Activated CD4-positive, alpha-beta T cell treated with anti-CD3 and anti-CD28 coated beads, Interleukin-2, amount 10 ng/mL, durations not matched to agents 24 days and 14 days (primary cell): ENCODE measurements at regions of chr12 and their contacts with region 1.

Region 1: GRCh38 chr12:46401662-46402061 is 29.1 kb upstream of the SLC38A2 start:
- DNase-seq: no peak
- H3K4me3 Mint-ChIP-seq: no peak overlapping the region
- H3K27ac Mint-ChIP-seq: no peak overlapping the region
- H3K4me1 Mint-ChIP-seq: peaks cover 64% of the 10 kb centered on the region
- H3K27me3 Mint-ChIP-seq: no peaks in the 10 kb centered on the region

Region 2: DNA sequence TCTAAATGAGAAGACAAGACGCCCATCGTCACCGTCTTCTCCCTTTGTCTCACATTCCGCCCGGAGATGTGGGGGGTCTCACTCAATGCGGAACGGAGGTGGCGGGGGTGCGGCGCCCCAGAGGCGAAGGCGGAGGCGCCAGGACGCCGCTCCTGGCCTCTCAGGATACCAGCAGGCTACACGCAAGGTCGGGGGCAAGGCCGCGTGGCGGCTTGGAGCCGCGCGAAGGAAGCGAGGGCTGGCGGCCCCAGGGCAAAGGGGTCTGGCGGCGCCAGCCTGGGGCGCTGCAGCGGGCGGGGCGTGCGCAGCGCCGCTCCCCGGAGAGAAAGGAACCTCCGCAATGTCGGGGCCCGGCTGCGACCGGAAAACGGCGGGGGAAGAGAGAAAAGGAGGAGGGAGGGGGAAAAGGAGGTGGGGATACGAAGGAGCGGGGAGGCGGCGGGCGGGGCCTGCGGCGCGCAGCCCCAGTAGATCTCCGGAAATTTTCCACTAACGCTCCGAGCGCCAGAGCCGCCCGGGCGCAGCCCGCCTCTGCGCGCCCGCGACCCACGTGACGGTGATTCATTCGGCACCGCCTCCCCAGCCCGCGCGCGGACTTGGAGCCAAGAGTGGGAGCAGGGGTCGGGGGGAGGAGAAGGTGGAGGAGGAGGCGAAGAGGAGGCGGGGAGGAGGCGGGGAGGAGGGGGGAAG is 18.6 kb before region 1 on chr12:
- intact Hi-C with region 1: loop called (anchors 1 kb)
- DNase-seq: peak; percentile 99
- H3K4me3 Mint-ChIP-seq: peak overlapping the region; percentile 83
- H3K27ac Mint-ChIP-seq: peak overlapping the region; percentile 98
- H3K4me1 Mint-ChIP-seq: peaks cover 36% of the 10 kb centered on the region
- H3K27me3 Mint-ChIP-seq: no peaks in the 10 kb centered on the region

Region 3: GRCh38 chr12:46388427-46389021 is 13.1 kb before region 1 on chr12:
- intact Hi-C with region 1: loop called (anchors 1 kb)
- DNase-seq: no peak
- H3K4me3 Mint-ChIP-seq: peak overlapping the region; percentile 36
- H3K27ac Mint-ChIP-seq: peak overlapping the region; percentile 47
- H3K4me1 Mint-ChIP-seq: peaks cover 42% of the 10 kb centered on the region
- H3K27me3 Mint-ChIP-seq: no peaks in the 10 kb centered on the region

Region 4: DNA sequence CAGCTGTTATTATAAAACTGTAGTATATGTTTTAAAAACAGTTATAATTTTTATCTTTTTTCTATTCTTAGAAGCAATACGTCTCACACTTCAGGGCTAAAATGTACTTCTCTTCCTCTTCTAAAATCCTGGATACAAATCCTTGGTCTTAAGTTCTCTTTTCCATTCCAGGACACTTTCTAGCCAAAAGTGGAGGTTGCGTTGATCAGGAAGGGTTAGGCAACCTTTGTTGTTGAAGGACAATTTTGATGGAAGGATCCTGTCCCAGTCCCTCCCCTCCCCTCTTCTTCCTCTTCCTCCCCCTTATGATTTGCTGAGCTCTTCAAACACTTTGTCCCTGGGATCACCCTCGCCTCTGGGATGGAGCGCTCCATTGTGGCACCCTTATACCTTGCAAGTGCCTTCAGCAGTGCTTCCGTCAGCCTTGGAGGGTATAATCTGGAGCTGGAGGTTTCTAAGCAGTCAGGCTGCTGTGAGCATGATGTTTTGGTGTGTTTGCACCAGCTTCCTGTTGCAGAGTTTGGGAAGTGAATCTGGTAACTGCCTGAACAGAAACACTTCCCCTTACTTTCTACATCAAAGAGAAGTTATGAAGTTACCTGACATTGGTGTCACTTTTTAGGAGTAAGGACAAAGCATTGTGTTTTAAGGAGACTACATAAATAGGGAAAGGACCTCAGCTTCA is 58.3 kb after region 1 on chr12:
- intact Hi-C with region 1: no loop called
- DNase-seq: peak; percentile 81
- H3K4me3 Mint-ChIP-seq: peak overlapping the region; percentile 85
- H3K27ac Mint-ChIP-seq: peak overlapping the region; percentile 99
- H3K4me1 Mint-ChIP-seq: peaks cover 53% of the 10 kb centered on the region
- H3K27me3 Mint-ChIP-seq: no peaks in the 10 kb centered on the region

Region 5: DNA sequence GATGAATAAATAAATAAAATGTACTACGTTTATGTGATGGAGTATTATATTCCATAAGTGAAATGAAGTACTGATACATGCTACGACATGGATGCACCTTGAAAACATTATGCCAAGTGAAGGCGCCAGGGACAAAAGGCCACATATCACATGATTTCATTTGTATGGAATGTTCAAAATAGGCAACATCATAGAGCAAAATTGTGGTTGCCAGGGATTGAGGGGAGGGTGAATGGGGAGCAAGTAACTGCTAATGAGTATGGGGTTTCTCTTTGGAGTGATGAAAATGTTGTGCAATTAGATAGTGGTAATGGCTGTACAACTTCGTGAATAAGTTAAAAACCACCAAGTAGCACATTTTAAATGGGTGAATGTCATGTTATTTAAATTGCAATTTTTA is 291.4 kb after region 1 on chr12:
- intact Hi-C with region 1: no loop called
- DNase-seq: no peak
- H3K4me3 Mint-ChIP-seq: no peak overlapping the region
- H3K27ac Mint-ChIP-seq: no peak overlapping the region
- H3K4me1 Mint-ChIP-seq: no peaks in the 10 kb centered on the region
- H3K27me3 Mint-ChIP-seq: peaks cover 6% of the 10 kb centered on the region